Aorta (tissue), 5 donors: ENCODE measurements at regions of chr20 and their contacts with region 1.

Region 1: DNA sequence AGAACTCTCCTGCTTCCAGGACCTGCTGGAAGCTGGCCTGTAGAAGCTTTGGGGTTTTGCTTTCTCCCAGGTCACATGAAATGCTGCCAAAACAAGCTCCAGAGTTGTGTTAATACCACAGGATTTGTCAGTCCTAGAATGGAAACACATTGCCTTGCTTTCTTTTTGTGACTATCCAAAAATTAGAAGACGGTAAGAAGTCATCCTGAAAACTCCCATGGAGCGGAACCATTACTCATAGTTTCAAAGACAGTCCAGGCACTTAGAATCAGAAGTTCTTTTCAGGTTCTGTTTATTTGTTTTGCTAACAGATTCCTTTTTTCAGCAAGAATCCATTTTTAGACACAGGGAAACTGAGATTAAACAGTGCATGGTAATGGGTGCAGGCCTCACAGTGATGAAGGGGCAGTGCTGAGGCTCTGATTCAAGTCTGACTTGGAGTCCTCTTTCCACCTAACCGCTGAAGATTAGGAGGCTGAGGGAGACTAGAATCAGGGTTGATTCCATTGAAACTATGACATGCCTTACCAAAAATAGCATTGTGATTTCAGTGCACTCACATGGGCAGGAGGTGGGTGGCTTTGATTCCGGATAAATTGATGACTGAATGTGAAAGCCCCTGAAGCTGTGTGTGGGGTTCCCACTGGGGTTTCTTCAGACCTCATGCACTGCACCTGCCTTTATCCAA is 72.2 kb upstream of the NAA20 start:
- DNase-seq: no peak
- ATAC-seq: peak; percentile 47
- H3K4me3 ChIP-seq: no peak overlapping the region
- H3K27ac ChIP-seq: peak overlapping the region; percentile 80 to 83
- H3K4me1 ChIP-seq: peaks cover 4 to 8% of the 10 kb centered on the region in 2 donors
- H3K27me3 ChIP-seq: no peaks in the 10 kb centered on the region

Region 2: GRCh38 chr20:19974626-19975435 is 29.9 kb after region 1 on chr20:
- intact Hi-C with region 1: loop called in 1 of 2 experiments (anchors 2 kb)
- DNase-seq: peak; percentile 94 to 95
- ATAC-seq: peak; percentile 92
- H3K4me3 ChIP-seq: peak overlapping the region; percentile 35 to 79
- H3K27ac ChIP-seq: peak overlapping the region; percentile 96 to 97
- H3K4me1 ChIP-seq: peaks cover 4 to 5% of the 10 kb centered on the region in 2 donors
- H3K27me3 ChIP-seq: no peaks in the 10 kb centered on the region

Region 3: GRCh38 chr20:20207872-20208271 is 263.0 kb after region 1 on chr20:
- intact Hi-C with region 1: no loop called
- DNase-seq: no peak
- ATAC-seq: no peak
- H3K4me3 ChIP-seq: no peak overlapping the region
- H3K27ac ChIP-seq: no peak overlapping the region
- H3K4me1 ChIP-seq: no peaks in the 10 kb centered on the region
- H3K27me3 ChIP-seq: no peaks in the 10 kb centered on the region